ENCODE measurements at regions of chr5 and their contacts with region 1.

Region 1: DNA sequence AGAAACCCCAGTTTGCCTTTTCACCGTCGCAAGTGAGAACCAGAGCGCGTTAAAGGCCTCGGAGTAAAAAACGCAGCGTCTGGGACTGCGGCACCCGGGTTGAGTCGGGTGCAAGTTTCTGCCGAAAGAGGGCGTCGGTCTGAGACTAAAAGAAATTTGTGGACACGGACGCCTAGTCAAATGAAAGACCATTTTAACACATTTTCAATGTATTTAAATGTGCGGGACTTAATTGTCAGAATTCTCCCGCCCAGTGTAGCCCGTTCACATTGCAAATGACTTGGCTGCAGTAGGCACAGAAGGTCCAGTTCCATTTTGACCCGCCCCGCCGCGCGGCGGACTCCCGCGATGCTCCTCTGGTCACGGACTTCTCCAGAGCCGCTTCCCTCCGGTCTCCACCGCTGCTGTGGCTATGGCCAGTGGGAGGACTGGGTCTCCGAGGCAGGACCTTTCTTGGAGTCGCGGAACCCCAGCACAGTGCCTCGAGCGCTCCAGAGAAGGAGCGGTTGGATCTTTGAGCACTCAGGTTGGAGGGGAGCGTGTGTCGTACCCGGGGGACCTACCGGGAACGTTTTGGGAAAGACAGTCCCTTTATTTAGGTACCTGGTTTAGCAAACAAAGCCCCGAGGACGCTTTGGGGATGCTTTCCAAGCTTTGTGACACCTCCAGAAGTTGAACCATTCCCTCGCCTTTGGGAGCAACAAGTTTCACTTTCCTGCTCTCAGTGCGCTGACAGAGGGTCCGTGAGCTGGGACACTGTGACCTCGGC is 1.2 kb upstream of the NPR3 start:
- DNase-seq: peak; percentile 59
- H3K4me3 ChIP-seq: peak overlapping the region; percentile 41 to 46
- H3K27ac ChIP-seq: peak overlapping the region; percentile 28 to 68
- H3K4me1 ChIP-seq: no peaks in the 10 kb centered on the region
- H3K27me3 ChIP-seq: no peaks in the 10 kb centered on the region
- CTCF ChIP-seq: peak; percentile 46 to 66 (median 58)
- POLR2A ChIP-seq: no peak

Region 2: GRCh38 chr5:32642276-32643002 is 67.5 kb before region 1 on chr5:
- intact Hi-C with region 1: no loop called
- DNase-seq: no peak
- H3K4me3 ChIP-seq: no peak overlapping the region
- H3K27ac ChIP-seq: no peak overlapping the region
- H3K4me1 ChIP-seq: no peaks in the 10 kb centered on the region
- H3K27me3 ChIP-seq: no peaks in the 10 kb centered on the region
- CTCF ChIP-seq: no peak
- POLR2A ChIP-seq: no peak

Region 3: GRCh38 chr5:33299621-33300208 is 589.8 kb after region 1 on chr5:
- intact Hi-C with region 1: loop called (anchors 5 kb)
- DNase-seq: peak; percentile 7
- H3K4me3 ChIP-seq: no peak overlapping the region
- H3K27ac ChIP-seq: no peak overlapping the region
- H3K4me1 ChIP-seq: no peaks in the 10 kb centered on the region
- H3K27me3 ChIP-seq: no peaks in the 10 kb centered on the region
- CTCF ChIP-seq: peak in 3 of 4 experiments; percentile 42 to 63 (median 47)
- POLR2A ChIP-seq: no peak

Region 4: GRCh38 chr5:33423018-33423630 is 713.2 kb after region 1 on chr5:
- intact Hi-C with region 1: loop called (anchors 10 kb)
- DNase-seq: no peak
- H3K4me3 ChIP-seq: no peak overlapping the region
- H3K27ac ChIP-seq: no peak overlapping the region
- H3K4me1 ChIP-seq: no peaks in the 10 kb centered on the region
- H3K27me3 ChIP-seq: no peaks in the 10 kb centered on the region
- CTCF ChIP-seq: peak in 2 of 4 experiments; percentile 33 to 40
- POLR2A ChIP-seq: no peak

Measured in prostate gland (tissue), 2 donors.